HAP-1 (cell line): ENCODE measurements at regions of chr21 and their contacts with region 1.

Region 1: DNA sequence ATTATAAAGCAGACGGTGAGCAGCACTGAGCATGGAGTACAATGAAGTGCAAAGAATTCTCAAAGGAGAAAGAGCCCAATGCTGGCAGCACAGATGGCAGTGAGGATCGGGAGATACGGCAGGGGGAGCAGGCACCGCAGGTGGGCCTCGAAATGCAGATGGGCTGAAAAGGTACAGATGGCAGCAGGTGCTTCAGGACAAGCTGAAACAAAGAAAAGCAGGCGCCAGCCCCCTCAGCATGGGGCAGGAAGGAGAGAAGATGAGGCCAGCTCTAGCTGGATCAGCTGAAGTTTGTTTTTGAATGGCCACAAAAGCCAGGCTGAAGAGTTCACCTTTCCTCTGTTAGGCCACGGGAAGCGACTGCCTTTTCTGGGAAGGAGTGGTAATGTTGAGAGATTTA is 7.7 kb downstream of the CFAP298 start:
- DNase-seq: no peak
- H3K4me3 ChIP-seq: no peak overlapping the region
- H3K4me1 ChIP-seq: no peaks in the 10 kb centered on the region
- H3K27me3 ChIP-seq: no peaks in the 10 kb centered on the region

Region 2: DNA sequence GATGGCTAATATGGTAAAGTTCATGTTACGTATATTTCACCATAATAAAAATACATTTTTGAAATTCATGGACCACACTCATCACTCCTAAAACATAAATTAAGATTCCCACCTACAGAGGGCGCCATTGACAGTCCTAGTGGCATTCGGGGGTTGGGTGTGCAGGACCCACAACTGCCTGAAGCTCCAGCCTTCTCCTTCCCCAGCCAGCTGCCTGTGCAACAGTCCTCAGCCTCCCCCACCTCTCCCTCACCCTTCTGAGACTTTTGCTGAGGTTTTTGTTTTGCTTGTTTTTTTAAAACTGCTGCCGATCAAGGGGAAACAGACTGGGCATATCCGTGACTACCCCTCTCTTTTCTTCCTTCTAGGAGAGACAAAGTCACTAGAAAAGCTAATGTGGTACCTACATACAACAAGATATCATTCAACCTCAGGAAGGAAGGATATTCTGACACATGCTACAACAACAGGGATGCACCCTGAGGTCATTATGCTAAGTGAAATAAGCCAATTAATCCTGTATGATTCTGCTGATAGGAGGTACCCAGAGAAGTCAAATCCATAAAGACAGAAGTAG is 201.2 kb before region 1 on chr21:
- in situ Hi-C with region 1: loop called (anchors 5 kb)
- DNase-seq: peak; percentile 60 to 83
- H3K4me3 ChIP-seq: no peak overlapping the region
- H3K4me1 ChIP-seq: 0 out of 2 replicates have a peak, but pooled peaks cover 3% of the 10 kb centered on the region
- H3K27me3 ChIP-seq: peaks cover 5% of the 10 kb centered on the region

Region 3: GRCh38 chr21:32889596-32889995 is 285.1 kb after region 1 on chr21:
- in situ Hi-C with region 1: no loop called
- DNase-seq: no peak
- H3K4me3 ChIP-seq: no peak overlapping the region
- H3K4me1 ChIP-seq: no peaks in the 10 kb centered on the region
- H3K27me3 ChIP-seq: peaks cover 11% of the 10 kb centered on the region